Calu3 (cell line): ENCODE measurements at regions of chr20 and their contacts with region 1.

Region 1: DNA sequence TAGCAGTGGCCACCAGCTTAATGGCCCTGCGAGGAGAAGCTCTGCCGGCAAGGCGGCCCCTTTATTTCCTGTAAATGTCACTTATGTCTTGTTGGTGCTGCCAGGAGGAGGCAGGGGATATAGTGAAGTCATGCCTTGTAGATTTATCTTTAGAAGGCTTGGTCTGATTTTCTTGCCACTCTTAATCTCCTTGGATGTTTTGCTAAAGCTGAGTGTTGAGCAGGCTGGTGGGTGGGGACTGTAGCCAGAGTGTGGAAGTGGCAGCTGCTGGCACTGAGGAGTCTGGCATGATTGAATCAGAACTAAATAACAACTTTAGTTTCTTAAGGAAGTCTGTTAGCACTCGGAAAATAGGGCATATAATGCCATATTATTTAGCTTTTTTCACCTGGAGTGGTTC is 77.9 kb downstream of the PHF20 start:
- DNase-seq: no peak
- H3K4me3 Mint-ChIP-seq: no peak overlapping the region
- H3K27ac Mint-ChIP-seq: no peak overlapping the region
- H3K4me1 Mint-ChIP-seq: no peaks in the 10 kb centered on the region
- H3K27me3 Mint-ChIP-seq: no peaks in the 10 kb centered on the region
- CTCF ChIP-seq: no peak

Region 2: DNA sequence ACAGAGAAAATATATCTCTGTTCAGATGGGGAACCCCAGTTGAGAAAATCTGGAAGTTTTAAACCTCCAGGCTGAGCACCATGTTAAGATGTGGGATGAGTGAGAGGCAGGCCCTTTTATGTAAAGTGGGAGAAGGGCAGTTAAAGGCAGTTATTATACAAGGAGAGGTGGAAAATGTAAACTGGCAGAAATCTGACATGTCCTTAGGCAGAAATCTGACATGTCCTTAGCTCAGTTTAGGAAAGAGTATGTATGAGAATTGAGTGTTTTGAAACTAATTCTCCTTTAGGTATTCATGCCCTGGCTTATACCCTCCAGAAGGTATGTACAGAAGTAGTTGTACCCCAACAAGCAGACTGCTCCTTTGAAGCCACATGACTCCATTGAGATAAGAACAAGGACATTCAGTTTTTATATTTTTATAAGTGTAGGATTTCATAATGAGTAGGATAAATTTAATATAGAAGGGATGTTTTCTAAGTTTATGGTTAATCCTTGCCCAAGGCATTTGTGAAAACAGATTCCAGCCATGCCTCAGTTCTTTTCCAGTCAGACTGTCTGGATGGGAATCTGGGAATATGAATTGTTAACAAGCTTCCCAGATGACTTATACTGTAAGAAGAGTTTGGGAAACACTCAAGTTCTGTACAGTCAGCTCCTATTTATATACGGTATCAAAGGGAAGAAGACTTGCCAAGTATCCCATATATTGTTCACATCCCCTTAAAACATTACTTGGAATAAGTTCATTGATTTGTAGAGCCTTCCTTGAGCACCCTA is 16.9 kb after region 1 on chr20:
- CTCF ChIA-PET with region 1: no interaction called
- intact Hi-C with region 1: loop called (anchors 1 kb)
- DNase-seq: no peak
- H3K4me3 Mint-ChIP-seq: no peak overlapping the region
- H3K27ac Mint-ChIP-seq: no peak overlapping the region
- H3K4me1 Mint-ChIP-seq: peaks cover 7% of the 10 kb centered on the region
- H3K27me3 Mint-ChIP-seq: no peaks in the 10 kb centered on the region
- CTCF ChIP-seq: no peak